ENCODE measurements at regions of chr9 and their contacts with region 1.

Region 1: DNA sequence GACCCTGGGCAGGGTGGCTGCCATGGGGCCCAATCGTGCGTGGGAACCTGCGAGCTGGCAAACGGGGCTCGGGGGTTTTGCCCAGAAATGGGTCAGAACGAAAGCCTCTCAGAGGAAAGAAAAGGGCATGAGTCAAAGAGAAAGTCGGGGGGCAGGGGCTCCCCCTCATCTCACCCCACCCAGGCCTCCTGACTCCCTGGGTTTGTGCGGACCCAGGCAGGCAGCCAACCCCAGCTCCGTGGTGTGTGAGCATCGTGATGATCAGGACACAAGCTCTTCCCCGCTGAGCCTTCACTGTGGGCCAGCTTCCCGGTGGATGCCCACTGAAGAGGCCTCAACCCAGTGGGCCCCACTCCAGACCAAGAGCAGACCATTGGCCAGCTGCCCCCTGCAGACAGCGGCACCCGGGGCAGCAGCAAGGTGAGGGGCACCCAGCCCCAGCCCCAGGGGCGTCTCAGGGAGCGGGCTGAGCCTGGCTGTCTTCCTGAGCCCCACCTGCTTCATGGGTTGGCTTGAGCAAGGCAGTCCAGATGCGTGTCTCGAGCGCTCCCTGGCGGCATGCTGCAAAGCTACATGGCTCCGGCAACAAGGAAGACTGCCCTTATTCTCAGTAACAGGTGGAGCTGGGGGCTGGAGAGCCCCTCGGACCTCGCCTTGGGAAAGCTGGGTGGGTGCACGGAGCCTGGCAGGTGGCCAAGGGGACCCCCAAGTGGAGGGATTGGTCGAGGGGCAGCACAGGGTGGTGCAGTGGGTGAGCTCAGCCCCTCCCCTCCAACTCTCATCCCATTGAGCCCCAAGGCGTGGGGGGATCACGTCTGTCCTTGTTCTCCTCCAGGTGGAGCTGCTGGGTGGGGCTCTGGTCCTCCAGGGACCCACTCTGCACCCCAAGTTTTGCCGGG is 3.2 kb upstream of the FUT7 start:
- DNase-seq: peak; percentile 93
- H3K4me3 Mint-ChIP-seq: peak overlapping the region; percentile 61
- H3K27ac Mint-ChIP-seq: peak overlapping the region; percentile 91
- H3K4me1 Mint-ChIP-seq: peaks cover 47% of the 10 kb centered on the region
- H3K27me3 Mint-ChIP-seq: peaks cover 21% of the 10 kb centered on the region

Region 2: DNA sequence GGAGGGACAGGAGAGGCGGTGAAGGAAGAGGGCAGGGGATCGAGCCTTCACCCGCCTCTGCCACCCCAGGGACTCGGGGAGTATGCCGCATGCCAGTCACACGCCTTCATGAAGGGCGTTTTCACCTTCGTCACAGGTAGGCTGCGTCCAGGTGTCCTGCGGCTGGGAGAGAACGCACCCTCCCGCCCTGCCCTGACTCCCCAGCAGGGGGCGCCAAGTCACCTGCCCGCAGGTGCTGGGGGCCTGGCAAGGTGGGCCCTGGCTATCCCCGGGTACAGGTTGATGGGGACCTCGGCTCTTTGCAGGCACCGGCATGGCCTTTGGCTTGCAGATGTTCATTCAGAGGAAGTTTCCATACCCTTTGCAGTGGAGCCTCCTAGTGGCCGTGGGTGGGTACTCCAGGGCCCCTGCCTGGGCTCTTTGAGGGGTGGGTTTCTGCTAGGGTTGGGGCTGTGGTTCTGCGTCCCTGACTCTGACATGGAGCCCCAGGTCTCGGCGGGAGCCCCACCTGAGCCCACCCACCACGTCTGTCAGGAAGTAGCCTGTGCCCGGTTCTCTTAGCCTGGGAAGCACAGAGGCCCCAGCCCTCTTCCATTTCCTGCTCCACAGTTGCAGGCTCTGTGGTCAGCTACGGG is 243.4 kb before region 1 on chr9:
- CTCF ChIA-PET with region 1: interaction called, 28 read pairs
- DNase-seq: peak; percentile 79
- H3K4me3 Mint-ChIP-seq: peak overlapping the region; percentile 82
- H3K27ac Mint-ChIP-seq: peak overlapping the region; percentile 95
- H3K4me1 Mint-ChIP-seq: peaks cover 41% of the 10 kb centered on the region
- H3K27me3 Mint-ChIP-seq: peaks cover 28% of the 10 kb centered on the region

Region 3: DNA sequence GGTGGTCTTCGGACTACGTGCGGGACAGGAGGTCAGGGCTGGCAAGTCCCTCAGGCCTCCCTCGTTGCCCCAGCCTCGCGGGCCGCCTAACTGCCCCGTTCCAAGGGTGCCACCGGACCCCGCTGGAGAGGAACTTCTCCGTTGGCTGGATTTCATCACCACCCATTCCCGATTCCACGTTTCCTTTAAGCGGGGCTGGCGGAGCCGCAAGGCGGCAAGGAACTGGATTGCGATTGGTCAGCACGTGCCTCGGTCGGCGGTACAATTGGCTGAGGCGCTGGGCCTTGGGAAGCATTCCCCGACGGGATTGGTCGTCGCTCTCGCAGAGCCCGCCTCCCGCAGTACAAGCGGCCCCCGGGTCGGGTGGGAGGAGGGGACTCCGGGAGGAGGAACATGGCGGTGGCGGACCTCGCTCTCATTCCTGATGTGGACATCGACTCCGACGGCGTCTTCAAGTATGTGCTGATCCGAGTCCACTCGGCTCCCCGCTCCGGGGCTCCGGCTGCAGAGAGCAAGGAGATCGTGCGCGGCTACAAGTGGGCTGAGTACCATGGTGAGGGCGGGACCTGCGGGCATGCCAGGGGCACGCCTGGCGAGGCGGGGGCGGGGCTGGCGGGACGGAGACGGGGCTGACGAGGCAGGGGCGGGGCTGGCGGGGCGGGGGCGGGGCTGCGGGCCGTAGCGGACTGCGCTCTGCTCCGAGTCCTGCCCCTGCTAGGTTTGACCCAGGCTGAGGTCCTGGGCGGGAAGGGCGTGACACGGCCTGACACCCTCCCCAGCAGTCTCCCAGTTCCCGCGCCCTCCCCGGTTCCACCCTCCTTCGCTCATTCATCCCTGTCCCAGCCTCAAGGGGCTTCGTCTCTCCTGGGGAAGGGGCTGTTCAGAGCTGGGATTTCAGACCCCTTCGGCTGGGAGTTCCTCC is 185.8 kb before region 1 on chr9 and contains the start of gene PHPT1:
- CTCF ChIA-PET with region 1: interaction called, 13 read pairs
- DNase-seq: peak; percentile 98
- H3K4me3 Mint-ChIP-seq: peak within 1 kb of the TSS; percentile 90
- H3K27ac Mint-ChIP-seq: peak within 1 kb of the TSS; percentile 88
- H3K4me1 Mint-ChIP-seq: peaks cover 22% of the 10 kb centered on the region
- H3K27me3 Mint-ChIP-seq: peaks cover 48% of the 10 kb centered on the region

Region 4: DNA sequence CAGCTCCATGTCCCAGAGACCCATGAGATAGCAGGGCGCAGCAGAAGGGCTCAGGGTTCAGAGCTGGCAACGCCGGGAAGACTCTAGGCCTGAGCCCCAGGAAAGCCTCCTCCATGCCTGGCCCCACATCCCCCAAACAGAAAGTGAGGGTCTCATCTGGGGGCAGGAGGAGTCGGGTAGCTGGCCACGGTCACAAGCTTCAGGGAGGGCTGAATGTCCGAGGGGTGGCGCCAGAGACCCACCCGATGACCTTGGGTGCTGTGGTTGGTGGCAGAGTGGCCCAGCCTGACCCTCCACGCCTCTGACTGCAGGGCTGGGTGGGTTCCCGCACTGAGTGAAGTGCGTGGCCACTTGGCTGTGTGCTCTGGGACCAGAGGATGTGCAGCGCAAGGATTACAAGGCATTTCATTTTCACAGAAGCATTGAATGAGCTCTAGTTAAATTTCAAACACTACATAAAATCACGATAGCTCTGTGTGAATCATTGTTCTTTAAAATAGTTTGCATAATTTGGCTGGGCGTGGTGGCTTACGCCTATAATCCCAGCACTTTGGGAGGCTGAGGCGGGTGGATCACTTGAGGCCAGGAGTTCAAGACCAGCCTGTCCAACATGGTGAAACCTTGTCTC is 87.0 kb before region 1 on chr9:
- CTCF ChIA-PET with region 1: interaction called, 39 read pairs
- DNase-seq: no peak
- H3K4me3 Mint-ChIP-seq: peak overlapping the region; percentile 84
- H3K27ac Mint-ChIP-seq: peak overlapping the region; percentile 45
- H3K4me1 Mint-ChIP-seq: peaks cover 24% of the 10 kb centered on the region
- H3K27me3 Mint-ChIP-seq: no peaks in the 10 kb centered on the region

Region 5: GRCh38 chr9:136975644-136976043 is 59.5 kb before region 1 on chr9:
- CTCF ChIA-PET with region 1: interaction called, 25 read pairs
- DNase-seq: peak; percentile 59
- H3K4me3 Mint-ChIP-seq: peak overlapping the region; percentile 58
- H3K27ac Mint-ChIP-seq: peak overlapping the region; percentile 73
- H3K4me1 Mint-ChIP-seq: peaks cover 26% of the 10 kb centered on the region
- H3K27me3 Mint-ChIP-seq: peaks cover 51% of the 10 kb centered on the region

Region 6: DNA sequence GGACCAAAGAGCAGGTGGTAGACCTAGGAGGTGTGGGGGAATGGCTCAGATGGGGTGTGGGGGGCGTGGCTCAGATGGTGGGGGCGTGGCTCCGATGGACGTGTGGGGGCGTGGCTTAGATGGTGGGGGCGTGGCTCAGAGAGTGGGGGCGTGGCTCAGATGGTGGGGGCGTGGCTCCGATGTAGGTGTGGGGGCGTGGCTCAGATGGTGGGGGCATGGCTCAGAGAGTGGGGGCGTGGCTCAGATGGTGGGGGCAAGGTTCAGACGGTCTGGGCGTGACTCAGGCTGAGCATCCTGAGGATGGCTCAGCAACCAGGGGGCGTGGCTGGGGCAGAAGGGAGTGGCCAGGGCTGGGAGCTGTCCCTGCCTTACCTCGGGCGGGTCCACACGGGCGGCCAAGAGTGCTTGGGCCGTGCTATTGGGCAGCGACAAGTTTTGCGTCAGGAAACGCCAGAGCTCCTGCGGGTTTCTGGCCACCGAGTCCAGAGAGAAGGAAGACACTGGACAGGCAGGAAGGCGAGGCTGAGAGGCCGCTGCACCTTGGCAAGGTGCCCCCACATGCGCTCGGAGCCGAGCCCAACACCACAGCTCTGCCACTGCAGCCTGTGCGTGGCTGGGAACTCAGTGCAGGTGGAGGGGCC is 13.0 kb before region 1 on chr9:
- CTCF ChIA-PET with region 1: interaction called, 22 read pairs
- DNase-seq: peak; percentile 82
- H3K4me3 Mint-ChIP-seq: no peak overlapping the region
- H3K27ac Mint-ChIP-seq: peak overlapping the region; percentile 38
- H3K4me1 Mint-ChIP-seq: peaks cover 10% of the 10 kb centered on the region
- H3K27me3 Mint-ChIP-seq: peaks cover 6% of the 10 kb centered on the region

Region 7: DNA sequence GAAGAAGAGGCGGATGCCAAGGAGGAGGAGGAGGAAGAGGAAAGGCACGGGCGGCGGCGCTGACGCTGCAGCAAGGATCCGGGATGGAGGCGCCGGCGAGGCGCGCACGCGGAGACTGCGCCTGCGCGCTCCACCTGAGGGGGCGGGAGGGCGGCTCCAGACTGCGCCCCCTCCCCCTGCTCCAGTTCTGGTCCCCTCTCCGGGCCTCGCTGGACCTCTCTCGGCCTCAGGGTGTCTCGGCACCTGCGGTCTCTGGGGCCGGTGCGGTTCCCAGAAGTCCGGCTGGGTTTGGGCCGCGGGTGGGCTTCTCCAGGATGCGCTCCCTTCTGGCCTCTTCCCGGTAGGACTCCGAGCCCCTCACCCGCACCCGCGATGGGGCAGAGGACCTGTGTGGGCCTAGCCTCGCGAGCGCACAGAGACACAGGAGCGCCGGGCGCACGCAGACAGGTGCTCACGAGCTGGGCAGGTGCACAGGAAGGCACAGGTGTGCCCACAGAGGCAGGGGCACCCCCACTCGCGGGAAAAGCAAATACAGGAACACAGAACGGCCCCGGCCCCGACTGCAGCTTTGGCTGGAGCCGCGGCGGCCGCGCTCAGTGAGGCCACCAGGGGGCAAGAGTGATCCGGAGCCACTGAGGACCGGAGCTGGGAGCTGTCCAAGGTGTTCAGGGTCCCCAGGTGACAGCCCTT is 11.1 kb after region 1 on chr9 and contains the start of gene NPDC1:
- CTCF ChIA-PET with region 1: interaction called, 17 read pairs
- DNase-seq: peak; percentile 92
- H3K4me3 Mint-ChIP-seq: peak within 1 kb of the TSS; percentile 75
- H3K27ac Mint-ChIP-seq: peak within 1 kb of the TSS; percentile 68
- H3K4me1 Mint-ChIP-seq: peaks cover 35% of the 10 kb centered on the region
- H3K27me3 Mint-ChIP-seq: peaks cover 86% of the 10 kb centered on the region

Region 8: DNA sequence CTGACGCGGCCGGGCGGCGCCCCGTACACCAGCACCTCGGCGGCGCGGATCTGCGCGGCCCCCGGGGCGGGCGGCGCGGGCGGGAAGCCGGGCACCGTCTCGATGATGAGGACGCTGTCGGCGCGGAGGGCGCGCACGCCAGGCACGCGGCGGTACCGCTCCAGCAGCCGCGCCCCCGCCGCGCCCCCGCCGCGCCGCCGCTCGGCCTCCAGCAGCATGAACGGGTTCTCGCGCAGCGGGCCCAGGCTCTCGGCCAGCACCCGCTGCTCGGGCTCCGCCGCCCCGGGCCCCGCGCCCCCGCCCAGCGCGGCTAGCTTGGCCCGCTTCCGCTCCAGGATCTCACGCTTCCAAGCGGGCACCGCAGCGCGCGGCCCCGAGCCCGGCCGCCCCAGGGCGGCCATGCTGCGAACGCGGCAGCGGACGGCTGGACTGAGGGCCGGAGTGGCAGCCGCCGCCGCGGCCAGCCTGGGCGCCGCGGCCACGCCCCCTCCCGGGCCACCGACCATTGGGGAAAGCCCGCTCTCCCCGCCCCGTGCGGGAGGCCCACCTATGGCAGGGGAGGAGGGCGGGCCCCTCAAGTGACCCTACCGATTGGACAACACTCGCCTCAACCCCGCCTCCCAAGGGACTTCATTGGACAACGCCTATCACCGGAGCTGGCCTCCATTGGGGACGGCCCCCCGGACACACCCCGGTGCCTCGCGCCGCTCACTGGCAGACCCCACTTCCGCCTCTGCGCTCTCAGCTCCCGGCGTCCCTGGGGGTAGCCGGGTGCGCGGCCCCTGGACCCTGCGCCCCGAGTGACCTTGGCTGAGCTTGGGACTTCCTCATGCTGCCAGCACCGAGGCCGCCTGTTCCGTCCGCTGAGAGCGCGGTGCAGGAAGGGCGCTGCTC is 165.4 kb after region 1 on chr9 and contains the start of gene TPRN:
- CTCF ChIA-PET with region 1: no interaction called
- DNase-seq: peak; percentile 99
- H3K4me3 Mint-ChIP-seq: peak within 1 kb of the TSS; percentile 80
- H3K27ac Mint-ChIP-seq: peak within 1 kb of the TSS; percentile 81
- H3K4me1 Mint-ChIP-seq: peaks cover 39% of the 10 kb centered on the region
- H3K27me3 Mint-ChIP-seq: peaks cover 11% of the 10 kb centered on the region